Spleen (tissue), 13 donors: ENCODE measurements at regions of chr10 and their contacts with region 1.

Region 1: GRCh38 chr10:103888113-103888841 is 29.7 kb downstream of the STN1 start:
- DNase-seq: no peak
- H3K4me3 ChIP-seq: no peak overlapping the region
- H3K27ac ChIP-seq: peak overlapping the region in 3 of 8 donors; percentile 27 to 78 (median 57)
- H3K4me1 ChIP-seq: peaks cover 0 to 40% (median 24%) of the 10 kb centered on the region in 6 donors
- H3K27me3 ChIP-seq: no peaks in the 10 kb centered on the region
- CTCF ChIP-seq: peak; percentile 78 to 94 (median 83)
- POLR2A ChIP-seq: no peak

Region 2: DNA sequence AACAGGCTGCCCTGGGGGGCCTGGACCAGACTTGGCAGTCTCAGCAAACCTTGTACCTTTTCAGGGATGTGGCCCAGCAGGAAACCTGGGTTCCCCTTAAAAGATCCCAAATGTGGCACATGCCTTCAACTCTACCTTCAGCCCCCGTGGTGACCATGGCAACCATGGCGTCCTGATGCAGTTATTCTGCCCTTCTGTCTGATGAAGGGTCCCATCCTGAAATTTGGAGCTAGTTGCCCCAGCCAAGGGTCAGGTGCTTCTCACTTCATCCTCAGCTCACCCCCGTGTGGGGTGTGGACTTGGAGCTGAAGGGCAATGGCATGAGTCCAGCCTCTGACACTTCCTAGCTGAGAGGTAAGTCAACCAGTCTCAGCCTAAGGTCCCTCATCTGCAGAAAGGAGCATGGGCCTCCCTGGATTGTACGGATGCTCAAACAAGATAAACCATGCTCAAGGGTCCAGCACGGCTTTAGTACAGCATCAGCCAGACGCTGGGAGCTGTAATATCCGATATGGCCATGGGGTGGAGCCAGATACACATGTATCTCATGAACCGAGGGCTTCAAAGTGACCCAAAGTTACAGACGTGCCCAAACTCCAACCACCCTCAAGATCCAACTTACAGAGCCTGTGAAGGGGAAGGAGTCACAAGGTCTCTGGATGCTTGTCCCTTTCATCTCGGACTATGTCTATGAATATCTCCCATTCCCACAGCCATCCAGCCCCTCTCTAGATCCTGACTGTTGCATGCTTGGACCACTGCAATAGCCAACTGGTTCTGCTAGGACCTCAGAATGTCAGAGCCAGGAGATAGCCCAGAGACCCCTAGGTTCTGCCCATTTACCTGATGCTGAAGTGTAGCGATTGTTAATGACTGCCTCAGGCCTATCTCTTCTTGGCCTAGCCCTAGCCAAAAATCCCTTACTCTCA is 175.4 kb before region 1 on chr10:
- intact Hi-C with region 1: loop called (anchors 5 kb)
- DNase-seq: peak; percentile 85
- H3K4me3 ChIP-seq: no peak overlapping the region
- H3K27ac ChIP-seq: no peak overlapping the region
- H3K4me1 ChIP-seq: peaks cover 0 to 12% (median 0%) of the 10 kb centered on the region in 6 donors
- H3K27me3 ChIP-seq: no peaks in the 10 kb centered on the region
- CTCF ChIP-seq: peak; percentile 85 to 96 (median 94)
- POLR2A ChIP-seq: no peak

Region 3: GRCh38 chr10:104080762-104081161 is 192.5 kb after region 1 on chr10:
- intact Hi-C with region 1: loop called (anchors 10 kb)
- DNase-seq: no peak
- H3K4me3 ChIP-seq: no peak overlapping the region
- H3K27ac ChIP-seq: no peak overlapping the region
- H3K4me1 ChIP-seq: peaks cover 0 to 4% (median 0%) of the 10 kb centered on the region in 6 donors
- H3K27me3 ChIP-seq: no peaks in the 10 kb centered on the region
- CTCF ChIP-seq: peak in 7 of 11 experiments; percentile 26 to 55 (median 42)
- POLR2A ChIP-seq: no peak

Region 4: GRCh38 chr10:104209575-104210198 is 321.4 kb after region 1 on chr10:
- intact Hi-C with region 1: loop called (anchors 2 kb)
- DNase-seq: no peak
- H3K4me3 ChIP-seq: no peak overlapping the region
- H3K27ac ChIP-seq: no peak overlapping the region
- H3K4me1 ChIP-seq: no peaks in the 10 kb centered on the region
- H3K27me3 ChIP-seq: peaks cover 0 to 1% (median 0%) of the 10 kb centered on the region in 7 donors
- CTCF ChIP-seq: peak in 9 of 11 experiments; percentile 8 to 67 (median 50)
- POLR2A ChIP-seq: no peak